Panc1 (cell line): ENCODE measurements at regions of chr15 and their contacts with region 1.

Region 1: DNA sequence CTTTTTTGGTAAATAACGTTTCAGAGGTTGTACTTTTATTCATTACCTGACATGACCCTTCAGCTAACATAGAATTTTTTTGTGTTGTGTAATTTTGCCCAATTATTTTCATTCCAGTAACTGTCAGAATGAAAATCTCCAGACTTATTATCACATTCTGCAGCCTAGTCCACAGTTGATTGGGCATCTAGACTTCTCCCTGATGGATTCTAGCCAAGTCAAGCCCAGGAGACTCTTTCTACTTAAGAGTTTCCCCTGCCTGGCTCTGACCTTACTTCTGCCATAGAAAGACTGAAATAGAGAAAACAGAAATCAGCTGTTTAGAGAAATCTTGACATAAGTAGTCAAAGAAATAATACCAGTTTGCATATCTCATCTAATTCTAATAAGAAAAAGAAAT is 82.9 kb upstream of the CDAN1 start:
- DNase-seq: no peak
- ATAC-seq: no peak
- H3K4me3 ChIP-seq: no peak overlapping the region
- H3K27ac ChIP-seq: no peak overlapping the region
- H3K4me1 ChIP-seq: no peaks in the 10 kb centered on the region
- H3K27me3 ChIP-seq: no peaks in the 10 kb centered on the region
- CTCF ChIP-seq: no peak

Region 2: GRCh38 chr15:42707068-42707467 is 112.7 kb before region 1 on chr15:
- CTCF ChIA-PET with region 1: no interaction called
- POLR2A ChIA-PET with region 1: no interaction called
- in situ Hi-C with region 1: no loop called
- intact Hi-C with region 1: no loop called
- DNase-seq: peak; percentile 15
- ATAC-seq: no peak
- H3K4me3 ChIP-seq: no peak overlapping the region
- H3K27ac ChIP-seq: no peak overlapping the region
- H3K4me1 ChIP-seq: no peaks in the 10 kb centered on the region
- H3K27me3 ChIP-seq: no peaks in the 10 kb centered on the region
- CTCF ChIP-seq: no peak

Region 3: DNA sequence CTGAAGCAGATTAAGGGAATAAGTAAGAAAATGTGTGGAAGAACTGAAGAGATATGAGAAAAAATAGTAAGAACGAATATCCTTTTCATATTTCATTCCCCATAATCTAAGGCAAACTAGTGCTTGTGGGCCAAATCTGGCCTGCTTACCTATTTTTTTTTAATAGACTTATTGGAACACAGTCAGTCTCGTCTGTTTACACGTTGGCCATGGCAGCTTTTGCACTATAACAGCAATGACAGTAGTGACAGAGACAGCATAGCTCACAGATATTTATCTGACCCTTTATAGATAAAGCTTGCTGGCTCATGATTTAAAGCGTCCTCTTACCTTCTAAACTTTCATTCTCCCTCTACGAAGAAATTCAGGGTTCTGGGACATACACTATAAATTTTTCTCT is 32.8 kb before region 1 on chr15:
- CTCF ChIA-PET with region 1: no interaction called
- POLR2A ChIA-PET with region 1: interaction called, 7 read pairs
- in situ Hi-C with region 1: no loop called
- intact Hi-C with region 1: loop called (anchors 2 kb)
- DNase-seq: no peak
- ATAC-seq: no peak
- H3K4me3 ChIP-seq: no peak overlapping the region
- H3K27ac ChIP-seq: no peak overlapping the region
- H3K4me1 ChIP-seq: no peaks in the 10 kb centered on the region
- H3K27me3 ChIP-seq: no peaks in the 10 kb centered on the region
- CTCF ChIP-seq: no peak

Region 4: DNA sequence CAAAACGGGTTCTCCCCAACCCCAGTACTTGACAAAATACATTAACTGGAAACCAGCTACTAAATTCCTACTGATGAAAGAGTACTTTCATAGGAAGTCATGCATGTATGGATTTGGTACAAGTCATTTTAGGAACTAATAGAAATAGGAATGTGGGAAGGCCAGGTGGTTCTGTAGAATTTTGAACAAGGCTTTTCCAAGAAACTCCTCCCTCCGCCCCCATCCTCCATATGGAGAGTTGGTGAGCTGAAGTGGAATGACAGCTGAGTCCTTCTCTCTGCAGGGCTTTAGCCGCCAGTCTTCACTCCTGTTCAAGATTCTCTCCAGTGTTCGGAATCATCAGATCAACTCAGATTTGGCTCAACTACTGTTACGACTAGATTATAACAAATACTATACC is 584.3 kb after region 1 on chr15:
- CTCF ChIA-PET with region 1: no interaction called
- POLR2A ChIA-PET with region 1: no interaction called
- in situ Hi-C with region 1: no loop called
- intact Hi-C with region 1: no loop called
- DNase-seq: no peak
- ATAC-seq: no peak
- H3K4me3 ChIP-seq: no peak overlapping the region
- H3K27ac ChIP-seq: no peak overlapping the region
- H3K4me1 ChIP-seq: no peaks in the 10 kb centered on the region
- H3K27me3 ChIP-seq: no peaks in the 10 kb centered on the region
- CTCF ChIP-seq: no peak